ENCODE measurements at regions of chr3 and their contacts with region 1.

Region 1: GRCh38 chr3:186108941-186109865 is at the start of gene ETV5:
- DNase-seq: peak; percentile 100
- H3K4me3 ChIP-seq: peak within 1 kb of the TSS; percentile 64 to 81 (median 72)
- H3K27ac ChIP-seq: peak within 1 kb of the TSS; percentile 75 to 86 (median 83)
- H3K4me1 ChIP-seq: peaks cover 21 to 44% (median 38%) of the 10 kb centered on the region in 4 donors
- H3K27me3 ChIP-seq: peaks cover 0 to 15% (median 0%) of the 10 kb centered on the region in 4 donors
- CTCF ChIP-seq: peak in 1 of 3 experiments; percentile 28
- EP300 ChIP-seq: no peak
- POLR2A ChIP-seq: peak; percentile 48
- total RNA-seq, gene ETV5: 6.6 to 12.4 (median 9.5) TPM

Region 2: GRCh38 chr3:185929192-185930151 is 179.7 kb before region 1 on chr3:
- intact Hi-C with region 1: no loop called
- DNase-seq: no peak
- H3K4me3 ChIP-seq: peak overlapping the region; percentile 9 to 23 (median 15)
- H3K27ac ChIP-seq: peak overlapping the region in 2 of 4 donors; percentile 36 to 43
- H3K4me1 ChIP-seq: peaks cover 94 to 100% (median 98%) of the 10 kb centered on the region in 4 donors
- H3K27me3 ChIP-seq: no peaks in the 10 kb centered on the region
- CTCF ChIP-seq: no peak
- EP300 ChIP-seq: no peak
- POLR2A ChIP-seq: no peak

Region 3: DNA sequence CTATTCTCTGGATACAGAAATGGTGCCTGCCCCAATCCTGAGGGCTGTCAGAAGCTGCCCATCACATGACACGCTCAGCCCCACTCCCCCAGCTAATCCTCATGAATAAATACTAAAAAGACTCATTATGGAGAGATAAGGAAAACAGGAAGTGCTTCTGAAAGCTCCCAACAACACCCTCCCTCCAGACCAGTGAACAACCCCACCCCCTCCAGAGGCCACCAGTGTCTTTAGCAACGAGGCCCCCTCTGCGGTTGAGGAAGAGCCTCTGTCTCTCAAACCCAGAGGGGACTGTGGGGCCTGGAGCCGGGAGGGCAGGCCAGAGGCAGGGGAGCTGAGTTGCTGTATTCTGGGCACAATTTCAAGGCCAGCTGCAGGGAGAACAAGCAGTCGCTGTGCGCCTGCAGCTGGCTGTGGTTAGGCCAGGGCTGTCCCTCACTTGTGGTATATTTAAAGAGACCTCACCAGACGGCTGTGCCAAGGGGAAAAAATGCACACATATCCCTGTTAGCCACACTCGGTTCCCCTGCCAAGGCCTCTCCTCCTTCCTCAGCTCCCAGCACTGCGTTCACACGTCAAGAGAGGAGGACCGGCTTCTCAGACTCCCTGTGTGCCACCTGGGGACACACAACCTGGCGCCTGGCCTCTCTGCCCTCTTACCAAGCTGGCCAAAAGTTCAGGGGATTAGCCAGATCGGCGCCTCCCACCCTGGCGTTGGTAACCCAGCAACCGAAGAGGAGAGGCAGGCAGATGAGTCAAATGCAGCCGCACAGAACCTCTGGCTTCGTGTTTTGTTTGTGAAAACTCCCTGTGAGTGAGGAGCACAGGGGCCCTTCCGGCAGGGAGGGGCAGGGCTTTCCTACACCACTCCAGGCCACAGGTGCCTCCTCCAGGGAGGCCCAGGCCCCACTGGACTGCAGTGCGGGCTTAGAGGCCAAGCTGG is 100.9 kb after region 1 on chr3:
- intact Hi-C with region 1: loop called (anchors 10 kb)
- DNase-seq: no peak
- H3K4me3 ChIP-seq: peak overlapping the region in 1 of 4 donors; percentile 22
- H3K27ac ChIP-seq: peak overlapping the region; percentile 56 to 82 (median 70)
- H3K4me1 ChIP-seq: peaks cover 22 to 59% (median 44%) of the 10 kb centered on the region in 4 donors
- H3K27me3 ChIP-seq: no peaks in the 10 kb centered on the region
- CTCF ChIP-seq: no peak
- EP300 ChIP-seq: no peak
- POLR2A ChIP-seq: no peak

Region 4: GRCh38 chr3:186669378-186670084 is 560.3 kb after region 1 on chr3:
- intact Hi-C with region 1: no loop called
- DNase-seq: no peak
- H3K4me3 ChIP-seq: no peak overlapping the region
- H3K27ac ChIP-seq: no peak overlapping the region
- H3K4me1 ChIP-seq: no peaks in the 10 kb centered on the region
- H3K27me3 ChIP-seq: peaks cover 0 to 32% (median 0%) of the 10 kb centered on the region in 4 donors
- CTCF ChIP-seq: no peak
- EP300 ChIP-seq: no peak
- POLR2A ChIP-seq: no peak